ENCODE measurements at regions of chr10 and their contacts with region 1.

Region 1: DNA sequence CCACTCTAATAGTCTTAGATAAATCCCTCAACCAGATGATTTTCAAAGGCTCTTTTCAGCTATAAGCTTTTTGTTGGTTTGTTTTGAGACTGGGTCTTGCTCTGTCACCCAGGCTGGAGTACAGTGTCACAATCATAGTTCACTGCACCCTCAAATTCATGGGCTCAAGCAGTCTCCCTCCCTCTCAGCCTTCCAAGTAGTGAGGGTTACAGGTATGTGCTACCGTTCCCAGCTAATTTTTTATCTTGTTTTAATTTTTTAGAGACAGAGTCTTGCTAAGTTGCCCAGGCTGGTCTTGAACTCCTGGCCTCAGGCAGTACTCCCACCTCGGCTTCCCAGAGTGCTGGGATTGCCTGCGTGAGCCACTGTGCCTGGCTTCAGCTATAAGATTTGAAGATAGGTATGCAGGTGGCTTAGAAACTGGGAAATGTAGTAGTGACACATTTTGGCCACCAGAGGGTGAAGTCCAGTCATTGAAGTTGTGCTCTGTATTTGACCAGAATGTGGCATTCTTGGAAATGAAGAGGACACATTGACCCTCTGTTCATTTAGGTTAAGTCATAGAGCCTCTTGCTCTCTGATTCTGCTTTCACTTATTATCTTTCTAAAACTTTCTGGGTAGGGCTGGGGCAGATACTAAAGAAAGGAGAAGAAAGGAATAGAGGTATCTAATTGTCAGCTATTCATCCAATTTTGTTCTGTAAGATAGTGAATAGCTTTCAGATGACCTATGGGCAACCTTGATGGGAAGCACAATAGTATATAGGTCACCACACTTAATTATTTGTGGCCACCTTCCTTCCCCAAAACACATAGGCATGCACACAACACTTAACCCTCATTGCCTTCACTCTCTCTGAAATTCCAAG is 36.0 kb downstream of the R3HCC1L start:
- DNase-seq: no peak
- H3K4me3 Mint-ChIP-seq: no peak overlapping the region
- H3K27ac Mint-ChIP-seq: no peak overlapping the region
- H3K4me1 Mint-ChIP-seq: peaks cover 6% of the 10 kb centered on the region
- H3K27me3 Mint-ChIP-seq: no peaks in the 10 kb centered on the region

Region 2: GRCh38 chr10:98246911-98247805 is 76.7 kb after region 1 on chr10:
- intact Hi-C with region 1: no loop called
- DNase-seq: no peak
- H3K4me3 Mint-ChIP-seq: no peak overlapping the region
- H3K27ac Mint-ChIP-seq: peak overlapping the region; percentile 5
- H3K4me1 Mint-ChIP-seq: no peaks in the 10 kb centered on the region
- H3K27me3 Mint-ChIP-seq: no peaks in the 10 kb centered on the region

Region 3: GRCh38 chr10:98309366-98310355 is 139.2 kb after region 1 on chr10:
- intact Hi-C with region 1: loop called (anchors 1 kb)
- DNase-seq: no peak
- H3K4me3 Mint-ChIP-seq: no peak overlapping the region
- H3K27ac Mint-ChIP-seq: no peak overlapping the region
- H3K4me1 Mint-ChIP-seq: no peaks in the 10 kb centered on the region
- H3K27me3 Mint-ChIP-seq: peaks cover 17% of the 10 kb centered on the region

Region 4: DNA sequence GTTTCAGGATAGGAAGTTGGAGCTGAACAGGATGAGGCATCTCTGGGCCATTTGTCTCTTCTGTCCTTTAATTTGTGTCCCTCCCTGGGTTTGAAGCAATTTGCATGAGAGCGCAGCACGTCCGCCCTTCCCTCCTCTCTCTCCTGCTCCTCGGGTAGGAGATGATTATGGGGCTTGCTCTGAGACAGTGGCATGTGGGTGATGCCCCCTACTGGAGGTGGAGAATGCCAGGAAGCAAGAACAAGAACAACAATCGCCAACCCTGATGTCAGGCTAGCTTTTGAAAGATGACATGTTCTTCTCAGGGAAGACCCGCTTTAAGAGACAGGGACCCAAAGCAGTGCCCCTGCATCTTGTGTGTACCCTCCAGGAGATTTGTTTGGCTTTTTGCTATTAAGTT is 161.4 kb after region 1 on chr10:
- intact Hi-C with region 1: loop called (anchors 1 kb)
- DNase-seq: no peak
- H3K4me3 Mint-ChIP-seq: no peak overlapping the region
- H3K27ac Mint-ChIP-seq: no peak overlapping the region
- H3K4me1 Mint-ChIP-seq: no peaks in the 10 kb centered on the region
- H3K27me3 Mint-ChIP-seq: peaks cover 11% of the 10 kb centered on the region